AG04449 (cell line): ENCODE measurements at regions of chr1 and their contacts with region 1.

Region 1: DNA sequence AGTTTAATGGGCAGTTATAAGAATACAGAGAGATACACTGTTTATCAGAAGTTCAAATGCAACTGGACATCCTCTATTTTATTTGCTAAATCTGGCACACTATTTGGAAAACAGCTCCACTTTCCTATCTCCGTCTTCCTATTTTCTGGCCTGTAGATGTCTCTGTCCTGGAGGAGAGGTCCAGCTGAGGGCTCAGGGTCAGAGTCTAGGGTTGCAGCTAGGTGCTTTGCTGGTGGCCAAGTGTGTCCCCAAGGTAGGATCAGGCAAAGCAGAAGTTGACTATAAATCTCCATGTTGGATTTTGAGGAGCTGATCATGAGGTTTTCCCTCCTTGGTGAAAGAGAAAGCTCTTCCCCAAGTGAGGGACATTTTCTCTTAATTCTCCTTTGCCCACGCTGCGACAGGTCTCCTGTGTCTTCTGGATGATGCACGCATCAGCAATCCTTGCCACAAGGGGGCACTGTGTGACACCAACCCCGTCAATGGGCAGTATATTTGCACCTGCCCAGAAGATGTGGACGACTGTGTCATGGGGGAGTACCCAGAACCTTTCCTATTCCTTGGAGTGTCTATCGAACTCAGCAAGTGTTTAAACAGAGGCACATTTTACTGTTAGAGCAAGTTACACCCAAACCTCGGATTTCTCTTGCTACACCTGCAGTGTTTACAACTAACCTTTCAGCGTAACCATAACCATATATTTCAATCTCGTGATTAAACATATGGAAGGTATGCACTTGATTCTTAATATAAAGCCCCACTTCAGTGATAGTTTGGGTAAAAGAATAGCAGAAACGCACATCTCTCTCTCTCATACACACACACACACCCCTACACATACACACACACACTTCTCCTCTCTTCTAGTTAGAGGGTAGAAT is 10.2 kb downstream of the ADAM30 start:
- DNase-seq: no peak
- H3K4me3 ChIP-seq: no peak overlapping the region
- CTCF ChIP-seq: peak; percentile 78

Region 2: GRCh38 chr1:119853155-119853554 is 33.0 kb before region 1 on chr1:
- CTCF ChIA-PET with region 1: no interaction called
- POLR2A ChIA-PET with region 1: no interaction called
- DNase-seq: no peak
- H3K4me3 ChIP-seq: no peak overlapping the region
- CTCF ChIP-seq: no peak

Region 3: DNA sequence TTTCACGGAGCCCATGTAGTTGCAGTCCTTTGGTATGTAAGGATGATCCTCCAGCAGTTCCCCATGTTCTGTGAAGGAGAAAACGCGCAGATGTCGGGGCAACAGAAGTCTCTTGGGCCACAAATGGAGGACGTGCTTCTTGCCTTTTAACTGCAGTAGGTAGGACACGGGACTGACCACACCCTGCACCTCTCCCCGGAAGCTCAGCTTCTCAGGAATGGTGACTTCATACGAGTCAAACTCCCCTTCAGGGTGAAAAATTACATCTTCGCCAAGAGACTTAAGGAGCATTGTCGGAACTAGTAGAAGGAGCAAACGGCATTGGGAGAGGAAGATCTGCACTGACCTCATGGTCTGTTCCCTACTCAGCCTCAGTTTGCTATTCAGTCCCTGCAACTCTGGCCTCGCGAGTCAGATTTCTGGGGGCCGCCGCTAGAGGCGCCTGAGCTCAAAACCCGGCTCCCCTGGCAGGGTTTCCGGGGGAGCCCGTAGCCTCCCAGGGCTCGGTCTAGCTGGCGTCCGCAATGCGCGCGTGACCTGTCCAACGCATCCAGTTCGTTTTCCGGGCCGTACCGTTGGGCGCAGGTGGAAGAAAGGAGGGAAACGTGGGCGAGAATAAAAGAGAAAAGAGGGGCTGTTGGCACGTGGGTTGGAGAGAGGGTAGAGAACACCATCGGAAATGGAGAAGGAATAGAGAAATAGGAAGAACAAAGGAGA is 10.0 kb after region 1 on chr1 and contains the start of gene ADAM30:
- CTCF ChIA-PET with region 1: interaction called, 39 read pairs
- POLR2A ChIA-PET with region 1: no interaction called
- DNase-seq: no peak
- H3K4me3 ChIP-seq: no peak within 1 kb of the TSS
- CTCF ChIP-seq: no peak

Region 4: GRCh38 chr1:119903443-119903835 is 17.3 kb after region 1 on chr1:
- CTCF ChIA-PET with region 1: interaction called, 39 read pairs
- POLR2A ChIA-PET with region 1: no interaction called
- DNase-seq: peak; percentile 4
- H3K4me3 ChIP-seq: no peak overlapping the region
- CTCF ChIP-seq: no peak

Region 5: DNA sequence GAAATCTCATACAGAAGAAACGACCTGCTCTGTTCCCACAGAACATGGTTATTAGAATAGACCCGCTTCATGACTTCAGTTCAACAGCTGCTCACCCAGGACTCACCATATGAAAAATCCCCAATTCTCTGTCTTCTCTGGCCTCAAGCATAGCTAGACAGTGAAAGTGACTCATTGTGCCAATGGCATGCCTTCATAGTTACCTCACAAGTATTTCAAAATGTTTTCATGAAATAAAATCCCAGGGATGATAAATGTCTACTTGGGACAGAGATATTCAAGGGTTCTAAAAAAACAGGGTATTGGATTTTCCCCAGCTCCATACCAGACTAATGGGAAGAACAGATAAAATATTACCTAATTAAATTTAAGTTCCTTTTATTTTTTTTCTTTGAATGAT is 101.0 kb after region 1 on chr1:
- CTCF ChIA-PET with region 1: no interaction called
- POLR2A ChIA-PET with region 1: no interaction called
- DNase-seq: peak; percentile 90
- H3K4me3 ChIP-seq: no peak overlapping the region
- CTCF ChIP-seq: no peak